ENCODE measurements at regions of chr10 and their contacts with region 1.

Region 1: GRCh38 chr10:18868919-18869318 is 179.7 kb upstream of the MALRD1 start:
- DNase-seq: no peak
- H3K4me3 ChIP-seq: no peak overlapping the region
- H3K27ac ChIP-seq: no peak overlapping the region
- H3K4me1 ChIP-seq: no peaks in the 10 kb centered on the region
- H3K27me3 ChIP-seq: no peaks in the 10 kb centered on the region
- CTCF ChIP-seq: no peak
- EP300 ChIP-seq: no peak
- POLR2A ChIP-seq: no peak

Region 2: GRCh38 chr10:18984531-18984930 is 115.6 kb after region 1 on chr10:
- in situ Hi-C with region 1: no loop called
- intact Hi-C with region 1: no loop called
- DNase-seq: no peak
- H3K4me3 ChIP-seq: no peak overlapping the region
- H3K27ac ChIP-seq: no peak overlapping the region
- H3K4me1 ChIP-seq: no peaks in the 10 kb centered on the region
- H3K27me3 ChIP-seq: no peaks in the 10 kb centered on the region
- CTCF ChIP-seq: no peak
- EP300 ChIP-seq: no peak
- POLR2A ChIP-seq: no peak

Region 3: GRCh38 chr10:19194866-19195265 is 325.9 kb after region 1 on chr10:
- in situ Hi-C with region 1: no loop called
- intact Hi-C with region 1: no loop called
- DNase-seq: no peak
- H3K4me3 ChIP-seq: no peak overlapping the region
- H3K27ac ChIP-seq: no peak overlapping the region
- H3K4me1 ChIP-seq: no peaks in the 10 kb centered on the region
- H3K27me3 ChIP-seq: no peaks in the 10 kb centered on the region
- CTCF ChIP-seq: no peak
- EP300 ChIP-seq: no peak
- POLR2A ChIP-seq: no peak

Region 4: DNA sequence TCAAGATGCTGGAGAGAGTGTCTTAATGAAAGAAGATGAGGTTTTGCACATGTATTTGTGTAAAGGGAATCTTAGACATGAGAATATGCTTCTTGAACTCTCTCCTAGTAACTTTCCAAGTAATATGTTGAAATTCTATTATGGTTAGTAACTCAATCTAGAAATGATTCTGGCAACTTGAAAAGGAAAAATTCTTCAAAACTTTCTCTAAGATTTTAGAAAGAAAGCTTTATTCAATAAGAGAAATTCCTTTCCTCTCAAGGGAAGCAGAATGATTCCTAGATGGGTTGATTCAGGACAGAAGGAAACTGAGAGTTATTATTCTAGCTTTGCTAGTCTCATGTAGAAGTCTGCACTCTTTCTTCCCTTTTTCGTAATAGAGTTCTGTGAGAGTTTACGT is 583.0 kb after region 1 on chr10:
- in situ Hi-C with region 1: no loop called
- intact Hi-C with region 1: loop called (anchors 5 kb)
- DNase-seq: no peak
- H3K4me3 ChIP-seq: no peak overlapping the region
- H3K27ac ChIP-seq: no peak overlapping the region
- H3K4me1 ChIP-seq: no peaks in the 10 kb centered on the region
- H3K27me3 ChIP-seq: no peaks in the 10 kb centered on the region
- CTCF ChIP-seq: no peak
- EP300 ChIP-seq: no peak
- POLR2A ChIP-seq: no peak

Measured in transverse colon (tissue), 4 donors.